ENCODE measurements at regions of chr5 and their contacts with region 1.

Region 1: GRCh38 chr5:31678180-31678579 is 39.2 kb downstream of the PDZD2 start:
- DNase-seq: no peak
- ATAC-seq: peak; percentile 64

Region 2: DNA sequence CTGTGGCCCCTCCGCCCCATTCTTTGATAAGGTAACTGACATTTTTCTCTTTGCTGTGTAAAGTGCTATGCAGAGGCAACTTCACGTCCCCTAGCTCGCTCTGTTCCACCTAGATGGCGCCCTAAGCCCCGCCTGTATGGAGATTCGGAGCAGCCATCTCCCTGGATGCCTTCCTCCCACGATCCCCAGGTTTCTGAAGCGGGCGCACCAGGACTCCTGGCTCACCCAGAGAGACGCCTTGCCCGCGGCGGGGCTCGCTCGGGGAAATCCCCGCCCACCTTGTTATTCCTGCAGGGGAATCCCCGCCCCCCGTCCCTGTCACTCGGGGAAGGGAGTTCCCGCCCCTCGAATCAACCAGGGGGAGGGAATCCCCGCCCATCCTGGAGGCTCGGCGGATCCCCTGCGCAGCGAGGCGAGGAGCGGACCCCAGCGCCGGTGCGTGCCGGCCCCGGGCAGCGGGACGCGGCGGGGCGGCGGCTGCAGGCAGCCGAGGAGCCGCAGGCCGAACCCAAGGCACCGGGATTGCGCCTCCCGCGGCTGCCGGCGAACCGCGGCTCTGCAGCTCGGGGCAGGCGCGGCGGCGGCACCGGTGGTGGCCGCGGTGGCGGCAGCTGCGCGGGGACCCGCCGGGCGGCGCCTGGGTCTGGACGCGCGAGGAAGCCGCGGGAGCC is 39.3 kb before region 1 on chr5 and contains the start of gene PDZD2:
- intact Hi-C with region 1: loop called (anchors 2 kb)
- DNase-seq: peak; percentile 89
- ATAC-seq: peak; percentile 77
- total RNA-seq, gene PDZD2: 81.5 TPM

Region 3: DNA sequence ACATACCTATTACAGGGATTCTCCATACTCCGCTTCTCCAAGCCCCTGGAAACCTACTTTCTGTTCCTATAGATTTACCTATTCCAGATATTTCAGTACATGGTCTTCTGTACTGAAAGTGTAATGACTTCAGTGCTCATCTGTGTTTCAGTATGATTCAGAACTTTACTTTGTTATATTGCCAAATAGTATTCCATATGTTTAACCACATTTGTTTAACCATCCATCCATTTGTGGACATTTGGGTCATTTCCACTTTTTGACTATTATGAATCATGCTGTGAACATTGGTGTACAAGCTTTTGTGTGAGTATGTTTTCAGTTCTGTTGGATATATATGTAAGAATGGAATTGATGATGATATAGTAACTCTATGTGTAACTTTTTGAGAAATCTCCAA is 149.7 kb after region 1 on chr5:
- intact Hi-C with region 1: no loop called
- DNase-seq: no peak
- ATAC-seq: no peak